GM13976 (cell line): ENCODE measurements at regions of chr2 and their contacts with region 1.

Region 1: DNA sequence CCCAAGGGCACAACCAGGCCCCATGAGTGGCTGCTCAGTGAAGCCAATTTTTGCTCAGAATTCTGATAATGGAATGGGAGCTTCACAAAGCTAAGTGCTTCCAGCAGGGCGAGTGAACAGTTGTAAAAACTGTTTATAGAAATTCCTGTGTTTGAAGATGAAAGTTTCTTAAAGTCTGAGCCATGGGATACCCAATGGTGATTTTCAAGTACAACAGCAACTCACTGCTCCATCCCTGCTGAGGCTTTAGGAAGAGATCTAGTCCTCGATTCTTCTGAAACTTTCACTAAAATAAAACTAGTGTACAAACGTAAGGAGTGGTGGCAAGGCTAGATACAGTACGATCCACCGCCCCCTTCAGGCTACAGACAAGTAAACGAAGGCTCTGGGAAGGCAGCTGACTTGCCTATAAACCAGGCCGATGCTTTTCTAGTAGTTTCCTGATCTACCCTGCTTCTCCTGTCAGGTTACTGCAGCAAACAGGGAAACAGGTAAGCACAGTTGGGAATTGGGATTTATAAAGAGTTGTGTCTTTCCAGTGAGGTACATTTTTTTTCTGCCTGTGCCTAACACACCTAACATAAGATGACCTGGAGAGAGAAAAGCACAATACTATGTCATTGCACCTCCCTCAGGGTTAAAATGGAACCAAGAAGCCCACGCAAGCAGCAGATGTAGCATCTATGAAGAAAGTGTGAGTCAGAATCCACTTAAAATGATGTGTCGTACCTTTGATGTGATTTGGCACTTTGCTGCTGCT is 108.7 kb downstream of the UXS1 start:
- DNase-seq: no peak
- CTCF ChIP-seq: peak; percentile 35

Region 2: GRCh38 chr2:105576440-105577252 is 508.7 kb before region 1 on chr2:
- in situ Hi-C with region 1: loop called (anchors 10 kb)
- DNase-seq: peak; percentile 70
- CTCF ChIP-seq: peak; percentile 48

Region 3: DNA sequence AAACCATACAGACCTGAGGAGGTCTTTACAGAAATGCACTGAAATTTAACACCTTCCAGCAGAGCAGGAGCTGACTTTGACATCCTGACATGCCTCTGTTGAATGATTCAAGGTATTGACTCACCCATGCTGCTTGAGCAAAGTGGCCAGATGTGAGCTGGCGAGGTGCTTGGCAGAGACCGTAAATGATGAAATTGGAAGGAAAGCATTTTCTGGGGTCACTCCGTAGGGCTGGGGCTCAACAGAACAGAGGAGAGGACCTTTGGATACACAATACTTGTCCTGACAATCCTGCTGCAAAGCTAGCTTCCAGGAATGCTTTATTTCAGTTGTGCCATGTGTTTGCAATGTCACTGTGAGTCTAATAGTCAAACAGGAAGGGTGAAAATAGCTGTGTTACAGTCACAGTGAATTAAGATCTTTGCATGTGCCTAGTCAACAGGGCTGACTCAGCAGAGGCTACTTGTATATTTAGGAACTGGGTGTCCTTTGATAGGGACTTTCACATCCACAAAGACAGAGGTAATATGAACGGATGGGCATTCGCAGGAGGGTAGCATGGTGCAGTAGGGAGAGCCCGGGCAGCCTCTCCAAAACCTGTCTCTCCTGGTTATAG is 372.3 kb before region 1 on chr2:
- in situ Hi-C with region 1: no loop called
- DNase-seq: no peak
- CTCF ChIP-seq: no peak

Region 4: GRCh38 chr2:105744091-105744908 is 341.1 kb before region 1 on chr2:
- in situ Hi-C with region 1: loop called (anchors 25 kb)
- DNase-seq: peak; percentile 91
- CTCF ChIP-seq: no peak